HCT116 (cell line): ENCODE measurements at regions of chr10 and their contacts with region 1.

Region 1: GRCh38 chr10:60434418-60435046 is 44.9 kb upstream of the ANK3 start:
- DNase-seq: peak; percentile 43
- ATAC-seq: peak; percentile 75
- H3K4me3 ChIP-seq: no peak overlapping the region
- H3K27ac ChIP-seq: no peak overlapping the region
- H3K4me1 ChIP-seq: no peaks in the 10 kb centered on the region
- H3K27me3 ChIP-seq: no peaks in the 10 kb centered on the region
- CTCF ChIP-seq: peak; percentile 47 to 85 (median 85)
- POLR2A ChIP-seq: no peak
- RAD21 ChIP-seq: peak; percentile 90

Region 2: DNA sequence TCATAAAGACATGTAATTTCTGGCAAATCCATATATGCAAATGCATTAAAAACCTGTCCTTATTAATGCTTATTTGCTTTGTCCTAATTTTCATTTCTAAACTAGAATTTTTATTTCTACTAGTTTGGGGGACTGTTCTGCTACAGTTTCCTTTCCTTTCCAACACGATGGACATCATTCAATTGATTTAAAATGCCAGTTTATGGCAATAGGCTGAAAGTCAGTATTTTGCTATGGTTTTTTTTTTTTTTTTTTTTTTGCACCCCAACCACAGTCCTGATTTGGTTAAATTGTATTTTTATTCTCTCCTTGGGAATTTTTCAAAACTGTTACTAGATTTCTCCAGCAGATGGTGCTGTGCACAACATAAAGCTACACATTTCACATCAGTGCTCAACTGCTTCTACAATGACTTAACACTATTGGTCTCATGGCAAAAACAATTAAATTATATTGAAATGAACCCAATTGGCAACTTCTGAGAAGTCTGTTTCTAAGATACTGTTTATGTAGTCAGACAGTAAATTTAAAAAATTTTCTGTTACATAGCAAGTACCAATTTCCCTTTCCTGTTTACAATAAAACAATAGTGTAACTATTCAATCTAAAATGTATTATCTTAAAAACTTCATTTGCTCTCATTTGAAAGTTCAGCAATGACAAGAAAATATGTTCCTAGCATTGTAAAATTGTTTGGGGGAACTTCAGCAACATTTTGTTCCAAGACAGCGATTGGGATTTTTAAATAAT is 334.4 kb before region 1 on chr10:
- CTCF ChIA-PET with region 1: interaction called, 10 read pairs
- POLR2A ChIA-PET with region 1: no interaction called
- RAD21 ChIA-PET with region 1: no interaction called
- intact Hi-C with region 1: loop called (anchors 1 kb)
- DNase-seq: peak; percentile 39
- ATAC-seq: peak; percentile 71
- H3K4me3 ChIP-seq: no peak overlapping the region
- H3K27ac ChIP-seq: no peak overlapping the region
- H3K4me1 ChIP-seq: peaks cover 0 to 4% of the 10 kb centered on the region in 2 experiments; a peak in 1 of 4 replicates
- H3K27me3 ChIP-seq: no peaks in the 10 kb centered on the region
- CTCF ChIP-seq: peak; percentile 48 to 66 (median 65); a peak in 5 of 6 replicates
- POLR2A ChIP-seq: no peak
- RAD21 ChIP-seq: peak; percentile 76

Region 3: GRCh38 chr10:60208676-60209269 is 225.8 kb before region 1 on chr10:
- CTCF ChIA-PET with region 1: interaction called, 7 read pairs
- POLR2A ChIA-PET with region 1: no interaction called
- RAD21 ChIA-PET with region 1: no interaction called
- intact Hi-C with region 1: loop called (anchors 2 kb)
- DNase-seq: peak; percentile 23
- ATAC-seq: peak; percentile 60; the same call in 1 of the 2 replicates
- H3K4me3 ChIP-seq: no peak overlapping the region
- H3K27ac ChIP-seq: no peak overlapping the region
- H3K4me1 ChIP-seq: no peaks in the 10 kb centered on the region
- H3K27me3 ChIP-seq: no peaks in the 10 kb centered on the region
- CTCF ChIP-seq: peak; percentile 76 to 86 (median 85)
- POLR2A ChIP-seq: no peak
- RAD21 ChIP-seq: peak; percentile 89

Region 4: GRCh38 chr10:60237977-60238758 is 196.4 kb before region 1 on chr10:
- CTCF ChIA-PET with region 1: interaction called, 5 read pairs
- POLR2A ChIA-PET with region 1: no interaction called
- RAD21 ChIA-PET with region 1: no interaction called
- intact Hi-C with region 1: loop called (anchors 1 kb)
- DNase-seq: peak; percentile 2
- ATAC-seq: peak; percentile 84
- H3K4me3 ChIP-seq: no peak overlapping the region
- H3K27ac ChIP-seq: no peak overlapping the region
- H3K4me1 ChIP-seq: no peaks in the 10 kb centered on the region
- H3K27me3 ChIP-seq: no peaks in the 10 kb centered on the region
- CTCF ChIP-seq: peak; percentile 21 to 42 (median 37); a peak in 4 of 6 replicates
- POLR2A ChIP-seq: no peak
- RAD21 ChIP-seq: peak; percentile 64

Region 5: DNA sequence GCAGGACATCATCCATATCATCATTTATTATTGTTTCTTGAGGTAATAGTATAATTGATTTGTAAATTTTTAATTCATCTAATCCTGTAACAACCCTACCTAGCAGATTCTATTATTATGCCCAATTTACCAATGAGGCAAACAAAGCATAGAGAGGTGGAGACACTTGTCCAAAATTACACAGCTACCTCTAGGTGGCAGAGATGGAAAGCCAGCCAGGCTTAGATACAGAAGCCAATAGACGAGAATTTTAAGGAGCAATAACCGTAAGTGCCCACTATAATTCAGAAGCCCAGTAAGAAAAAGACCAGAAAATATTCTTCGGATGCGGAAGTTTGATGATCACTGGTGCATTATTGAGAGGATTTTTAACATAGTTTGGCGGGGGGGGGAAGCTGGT is 98.8 kb before region 1 on chr10:
- CTCF ChIA-PET with region 1: interaction called, 4 read pairs
- POLR2A ChIA-PET with region 1: no interaction called
- RAD21 ChIA-PET with region 1: no interaction called
- intact Hi-C with region 1: loop called (anchors 5 kb)
- DNase-seq: no peak
- ATAC-seq: peak; percentile 82
- H3K4me3 ChIP-seq: no peak overlapping the region
- H3K27ac ChIP-seq: no peak overlapping the region
- H3K4me1 ChIP-seq: no peaks in the 10 kb centered on the region
- H3K27me3 ChIP-seq: no peaks in the 10 kb centered on the region
- CTCF ChIP-seq: peak; percentile 39 to 45 (median 39); a peak in 5 of 6 replicates
- POLR2A ChIP-seq: no peak
- RAD21 ChIP-seq: peak; percentile 59

Region 6: GRCh38 chr10:60964257-60965235 is 530.0 kb after region 1 on chr10:
- CTCF ChIA-PET with region 1: no interaction called
- POLR2A ChIA-PET with region 1: no interaction called
- RAD21 ChIA-PET with region 1: no interaction called
- intact Hi-C with region 1: loop called (anchors 10 kb)
- DNase-seq: peak; percentile 73
- ATAC-seq: peak; percentile 87
- H3K4me3 ChIP-seq: peak overlapping the region in 1 of 2 experiments; percentile 5; a peak in 1 of 4 replicates
- H3K27ac ChIP-seq: no peak overlapping the region
- H3K4me1 ChIP-seq: peaks cover 0 to 24% of the 10 kb centered on the region in 2 experiments; a peak in 3 of 4 replicates
- H3K27me3 ChIP-seq: no peaks in the 10 kb centered on the region
- CTCF ChIP-seq: peak; percentile 76 to 84 (median 77); a peak in 5 of 6 replicates
- POLR2A ChIP-seq: no peak
- RAD21 ChIP-seq: peak; percentile 76